Psoas muscle (tissue), 8 donors: ENCODE measurements at regions of chr2 and their contacts with region 1.

Region 1: GRCh38 chr2:9494096-9494495 is 19.7 kb downstream of the IAH1 start:
- DNase-seq: no peak
- ATAC-seq: no peak
- H3K4me3 ChIP-seq: no peak overlapping the region
- H3K27ac ChIP-seq: no peak overlapping the region
- H3K4me1 ChIP-seq: peaks cover 5% of the 10 kb centered on the region
- H3K27me3 ChIP-seq: no peaks in the 10 kb centered on the region
- CTCF ChIP-seq: no peak

Region 2: DNA sequence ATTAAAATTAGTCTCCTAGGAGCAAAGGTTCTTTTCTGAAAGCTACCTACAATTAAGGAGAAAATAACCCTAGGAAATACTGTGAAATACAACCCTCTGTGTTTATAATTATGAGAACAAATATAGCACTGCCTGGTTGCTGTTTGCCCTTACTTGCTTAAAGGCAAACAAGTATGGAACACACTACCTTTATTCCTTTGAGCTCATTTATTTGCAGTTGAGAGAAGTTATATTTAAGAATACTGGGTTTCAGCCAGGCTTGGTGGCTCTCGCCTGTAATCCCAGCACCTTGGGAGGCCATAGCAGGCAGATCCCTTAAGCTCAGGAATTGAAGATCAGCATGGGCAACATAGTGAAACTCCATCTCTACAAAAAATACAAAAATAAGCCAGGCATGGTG is 42.9 kb before region 1 on chr2:
- intact Hi-C with region 1: no loop called
- DNase-seq: no peak
- ATAC-seq: no peak
- H3K4me3 ChIP-seq: no peak overlapping the region
- H3K27ac ChIP-seq: no peak overlapping the region
- H3K4me1 ChIP-seq: no peaks in the 10 kb centered on the region
- H3K27me3 ChIP-seq: no peaks in the 10 kb centered on the region
- CTCF ChIP-seq: no peak

Region 3: DNA sequence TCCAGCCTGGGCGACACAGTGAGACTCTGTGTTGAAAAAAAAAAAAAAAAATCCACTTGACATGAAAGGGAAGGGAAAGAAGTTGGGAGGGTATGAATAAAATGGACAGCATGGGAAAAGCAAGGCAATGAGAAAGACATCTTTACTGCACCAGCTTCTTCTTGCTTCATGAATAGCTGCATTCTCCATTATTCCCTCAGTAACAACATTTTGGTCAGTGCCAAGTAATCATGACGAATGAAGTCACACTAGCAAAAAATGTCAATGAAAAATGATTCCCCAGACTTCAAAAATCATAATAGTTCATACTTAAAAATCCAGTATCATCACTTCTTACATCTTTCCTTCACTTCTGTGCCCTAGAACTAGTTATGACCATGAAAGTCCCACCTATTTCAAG is 31.2 kb after region 1 on chr2:
- intact Hi-C with region 1: loop called in 1 of 2 experiments (anchors 5 kb)
- DNase-seq: no peak
- ATAC-seq: no peak
- H3K4me3 ChIP-seq: no peak overlapping the region
- H3K27ac ChIP-seq: no peak overlapping the region
- H3K4me1 ChIP-seq: no peaks in the 10 kb centered on the region
- H3K27me3 ChIP-seq: no peaks in the 10 kb centered on the region
- CTCF ChIP-seq: no peak